ENCODE measurements at regions of chr17 and their contacts with region 1.

Region 1: DNA sequence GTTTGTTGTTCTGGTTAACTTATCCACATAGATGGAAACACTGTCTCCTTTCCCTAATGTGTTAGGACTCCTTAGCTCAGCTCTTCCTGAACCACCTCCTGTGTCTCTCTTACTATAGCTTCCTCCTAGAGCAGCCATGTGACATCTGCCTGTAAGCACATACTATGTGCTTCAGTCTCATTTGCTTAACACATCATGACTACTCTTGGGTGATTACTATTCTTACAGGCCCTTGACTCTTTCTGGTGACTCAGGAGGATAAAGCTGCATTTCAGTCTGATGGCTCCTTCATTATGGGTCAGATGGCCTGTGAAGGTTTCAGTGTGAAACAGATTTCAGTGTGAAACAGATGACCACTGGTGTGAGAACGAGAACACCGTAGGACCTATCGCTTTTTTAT is 320 bp upstream of the KRTAP4-2 start:
- H3K4me3 Mint-ChIP-seq: no peak overlapping the region
- H3K27ac Mint-ChIP-seq: peak overlapping the region; percentile 79
- H3K4me1 Mint-ChIP-seq: peaks cover 41% of the 10 kb centered on the region
- H3K27me3 Mint-ChIP-seq: peaks cover 33% of the 10 kb centered on the region

Region 2: DNA sequence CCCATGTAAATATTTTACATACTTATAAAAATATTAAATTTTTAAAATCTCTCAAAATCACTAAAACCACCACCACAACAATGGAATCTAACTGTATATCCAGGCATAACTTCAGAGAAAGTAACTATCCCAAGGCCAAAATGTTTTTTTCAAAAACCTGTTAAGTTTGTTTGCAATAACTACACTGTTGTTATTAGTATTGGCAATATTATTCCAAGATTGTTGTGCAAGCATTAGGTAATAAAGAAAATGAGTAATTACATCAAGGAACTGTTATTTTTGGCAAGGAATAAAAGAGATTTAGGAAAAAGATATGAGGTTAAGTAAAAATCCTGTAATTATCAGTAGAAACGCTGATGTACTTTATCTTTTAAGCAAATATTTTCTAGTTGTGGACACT is 51.0 kb before region 1 on chr17:
- intact Hi-C with region 1: loop called (anchors 10 kb)
- H3K4me3 Mint-ChIP-seq: no peak overlapping the region
- H3K27ac Mint-ChIP-seq: no peak overlapping the region
- H3K4me1 Mint-ChIP-seq: peaks cover 10% of the 10 kb centered on the region
- H3K27me3 Mint-ChIP-seq: peaks cover 3% of the 10 kb centered on the region

Region 3: GRCh38 chr17:41223821-41224220 is 45.5 kb after region 1 on chr17:
- intact Hi-C with region 1: no loop called
- H3K4me3 Mint-ChIP-seq: no peak overlapping the region
- H3K27ac Mint-ChIP-seq: no peak overlapping the region
- H3K4me1 Mint-ChIP-seq: no peaks in the 10 kb centered on the region
- H3K27me3 Mint-ChIP-seq: peaks cover 14% of the 10 kb centered on the region